CD14-positive monocyte (primary cell): ENCODE measurements at regions of chr22 and their contacts with region 1.

Region 1: GRCh38 chr22:19432133-19432851 is at the start of gene MRPL40:
- DNase-seq: peak; percentile 81 to 93 (median 88)
- H3K4me3 ChIP-seq: peak within 1 kb of the TSS; percentile 82 to 97 (median 87)
- H3K4me3 Mint-ChIP-seq: peak within 1 kb of the TSS; percentile 86 to 93
- H3K27ac ChIP-seq: peak within 1 kb of the TSS; percentile 90 to 95
- H3K27ac Mint-ChIP-seq: peak within 1 kb of the TSS; percentile 89 to 94 (median 91)
- H3K4me1 ChIP-seq: peaks cover 42% of the 10 kb centered on the region in 2 donors
- H3K4me1 Mint-ChIP-seq: peaks cover 38% of the 10 kb centered on the region
- H3K27me3 ChIP-seq: no peaks in the 10 kb centered on the region
- H3K27me3 Mint-ChIP-seq: peaks cover 0 to 2% (median 0%) of the 10 kb centered on the region in 3 donors
- CTCF ChIP-seq: no peak
- polyA plus RNA-seq, gene MRPL40: 9.2 to 61.4 (median 48.4) TPM

Region 2: GRCh38 chr22:19271856-19272535 is 160.3 kb before region 1 on chr22:
- intact Hi-C with region 1: no loop called
- DNase-seq: no peak
- H3K4me3 ChIP-seq: no peak overlapping the region
- H3K4me3 Mint-ChIP-seq: no peak overlapping the region
- H3K27ac ChIP-seq: no peak overlapping the region
- H3K27ac Mint-ChIP-seq: peak overlapping the region in 1 of 7 donors; percentile 19
- H3K4me1 ChIP-seq: no peaks in the 10 kb centered on the region
- H3K4me1 Mint-ChIP-seq: no peaks in the 10 kb centered on the region
- H3K27me3 ChIP-seq: no peaks in the 10 kb centered on the region
- H3K27me3 Mint-ChIP-seq: peaks cover 0 to 5% (median 1%) of the 10 kb centered on the region in 3 donors
- CTCF ChIP-seq: no peak

Region 3: GRCh38 chr22:19447388-19448075 is 15.2 kb after region 1 on chr22 and contains the start of gene C22orf39:
- intact Hi-C with region 1: loop called (anchors 2 kb)
- DNase-seq: peak; percentile 80 to 86 (median 84)
- H3K4me3 ChIP-seq: peak within 1 kb of the TSS; percentile 54 to 82 (median 69)
- H3K4me3 Mint-ChIP-seq: peak within 1 kb of the TSS; percentile 91 to 96
- H3K27ac ChIP-seq: peak within 1 kb of the TSS; percentile 58 to 87
- H3K27ac Mint-ChIP-seq: peak within 1 kb of the TSS; percentile 80 to 96 (median 94)
- H3K4me1 ChIP-seq: peaks cover 16 to 26% of the 10 kb centered on the region in 2 donors
- H3K4me1 Mint-ChIP-seq: peaks cover 25% of the 10 kb centered on the region
- H3K27me3 ChIP-seq: no peaks in the 10 kb centered on the region
- H3K27me3 Mint-ChIP-seq: no peaks in the 10 kb centered on the region
- CTCF ChIP-seq: no peak
- polyA plus RNA-seq, gene C22orf39: 21.2 to 40.3 (median 38.4) TPM

Region 4: GRCh38 chr22:19463496-19464469 is 31.5 kb after region 1 on chr22:
- intact Hi-C with region 1: no loop called
- DNase-seq: no peak
- H3K4me3 ChIP-seq: no peak overlapping the region
- H3K4me3 Mint-ChIP-seq: no peak overlapping the region
- H3K27ac ChIP-seq: no peak overlapping the region
- H3K27ac Mint-ChIP-seq: no peak overlapping the region
- H3K4me1 ChIP-seq: no peaks in the 10 kb centered on the region
- H3K4me1 Mint-ChIP-seq: no peaks in the 10 kb centered on the region
- H3K27me3 ChIP-seq: no peaks in the 10 kb centered on the region
- H3K27me3 Mint-ChIP-seq: peaks cover 0 to 2% (median 0%) of the 10 kb centered on the region in 3 donors
- CTCF ChIP-seq: no peak